ENCODE measurements at regions of chr15 and their contacts with region 1.

Region 1: GRCh38 chr15:42845581-42845980 is 75.0 kb downstream of the TTBK2 start:
- DNase-seq: no peak
- ATAC-seq: no peak
- H3K4me3 Mint-ChIP-seq: no peak overlapping the region
- H3K27ac Mint-ChIP-seq: no peak overlapping the region
- H3K4me1 Mint-ChIP-seq: no peaks in the 10 kb centered on the region
- H3K27me3 Mint-ChIP-seq: no peaks in the 10 kb centered on the region
- CTCF ChIP-seq: no peak

Region 2: GRCh38 chr15:42508263-42508690 is 337.3 kb before region 1 on chr15:
- CTCF ChIA-PET with region 1: no interaction called
- POLR2A ChIA-PET with region 1: no interaction called
- intact Hi-C with region 1: loop called (anchors 10 kb)
- DNase-seq: no peak
- ATAC-seq: no peak
- H3K4me3 Mint-ChIP-seq: no peak overlapping the region
- H3K27ac Mint-ChIP-seq: no peak overlapping the region
- H3K4me1 Mint-ChIP-seq: peaks cover 2% of the 10 kb centered on the region
- H3K27me3 Mint-ChIP-seq: no peaks in the 10 kb centered on the region
- CTCF ChIP-seq: no peak

Region 3: DNA sequence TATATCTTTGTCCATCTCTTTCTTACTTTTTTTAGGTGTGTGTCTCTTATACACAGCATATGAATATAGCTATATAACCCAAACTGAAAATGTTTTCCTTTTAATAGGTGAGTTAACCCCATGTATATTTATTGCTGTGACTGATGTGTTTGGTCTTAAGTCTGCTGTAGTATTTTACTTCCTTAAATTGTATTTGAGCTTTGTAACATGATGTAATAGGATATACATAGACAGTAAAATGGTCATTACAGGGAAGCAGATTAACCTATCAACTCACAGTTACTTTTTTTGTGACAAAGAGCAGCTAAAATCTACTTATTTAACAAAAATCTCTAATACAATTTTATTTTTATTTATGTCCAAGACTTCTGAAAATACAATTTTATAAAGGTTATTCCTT is 56.9 kb before region 1 on chr15:
- CTCF ChIA-PET with region 1: no interaction called
- POLR2A ChIA-PET with region 1: no interaction called
- intact Hi-C with region 1: no loop called
- DNase-seq: no peak
- ATAC-seq: no peak
- H3K4me3 Mint-ChIP-seq: no peak overlapping the region
- H3K27ac Mint-ChIP-seq: no peak overlapping the region
- H3K4me1 Mint-ChIP-seq: no peaks in the 10 kb centered on the region
- H3K27me3 Mint-ChIP-seq: no peaks in the 10 kb centered on the region
- CTCF ChIP-seq: no peak

Region 4: GRCh38 chr15:42933886-42934667 is 88.5 kb after region 1 on chr15:
- CTCF ChIA-PET with region 1: no interaction called
- POLR2A ChIA-PET with region 1: no interaction called
- intact Hi-C with region 1: no loop called
- DNase-seq: no peak
- ATAC-seq: no peak
- H3K4me3 Mint-ChIP-seq: no peak overlapping the region
- H3K27ac Mint-ChIP-seq: no peak overlapping the region
- H3K4me1 Mint-ChIP-seq: no peaks in the 10 kb centered on the region
- H3K27me3 Mint-ChIP-seq: no peaks in the 10 kb centered on the region
- CTCF ChIP-seq: no peak

Measured in activated CD8-positive, alpha-beta T cell treated with anti-CD3 and anti-CD28 coated beads for 36 hours (primary cell).